Activated naive CD8-positive, alpha-beta T cell treated with anti-CD3 and anti-CD28 coated beads, Interleukin-2, amount 10 ng/mL, durations not matched to agents 7 days and 5 days (primary cell): ENCODE measurements at regions of chr2 and their contacts with region 1.

Region 1: GRCh38 chr2:9630749-9631483 is at the start of gene YWHAQ:
- DNase-seq: peak; percentile 99
- ATAC-seq: peak; percentile 88
- H3K4me3 Mint-ChIP-seq: peak within 1 kb of the TSS; percentile 96
- H3K27ac Mint-ChIP-seq: peak within 1 kb of the TSS; percentile 95
- H3K4me1 Mint-ChIP-seq: peaks cover 39% of the 10 kb centered on the region
- H3K27me3 Mint-ChIP-seq: peaks cover 20% of the 10 kb centered on the region
- total RNA-seq, gene YWHAQ: 191 to 216 TPM

Region 2: GRCh38 chr2:9423100-9423921 is 207.6 kb before region 1 on chr2 and contains the starts of genes CPSF3 and ITGB1BP1:
- POLR2A ChIA-PET with region 1: interaction called, 18 read pairs
- DNase-seq: peak; percentile 98
- ATAC-seq: peak; percentile 84
- H3K4me3 Mint-ChIP-seq: no peak within 1 kb of the TSS
- H3K27ac Mint-ChIP-seq: peak within 1 kb of the TSS; percentile 92
- H3K4me1 Mint-ChIP-seq: peaks cover 21% of the 10 kb centered on the region
- H3K27me3 Mint-ChIP-seq: no peaks in the 10 kb centered on the region
- total RNA-seq, gene CPSF3: 43.3 to 48.0 TPM
- total RNA-seq, gene ITGB1BP1: 104 to 122 TPM

Region 3: GRCh38 chr2:9508931-9509330 is 122.0 kb before region 1 on chr2:
- POLR2A ChIA-PET with region 1: no interaction called
- DNase-seq: no peak
- ATAC-seq: no peak
- H3K4me3 Mint-ChIP-seq: no peak overlapping the region
- H3K27ac Mint-ChIP-seq: no peak overlapping the region
- H3K4me1 Mint-ChIP-seq: no peaks in the 10 kb centered on the region
- H3K27me3 Mint-ChIP-seq: no peaks in the 10 kb centered on the region

Region 4: DNA sequence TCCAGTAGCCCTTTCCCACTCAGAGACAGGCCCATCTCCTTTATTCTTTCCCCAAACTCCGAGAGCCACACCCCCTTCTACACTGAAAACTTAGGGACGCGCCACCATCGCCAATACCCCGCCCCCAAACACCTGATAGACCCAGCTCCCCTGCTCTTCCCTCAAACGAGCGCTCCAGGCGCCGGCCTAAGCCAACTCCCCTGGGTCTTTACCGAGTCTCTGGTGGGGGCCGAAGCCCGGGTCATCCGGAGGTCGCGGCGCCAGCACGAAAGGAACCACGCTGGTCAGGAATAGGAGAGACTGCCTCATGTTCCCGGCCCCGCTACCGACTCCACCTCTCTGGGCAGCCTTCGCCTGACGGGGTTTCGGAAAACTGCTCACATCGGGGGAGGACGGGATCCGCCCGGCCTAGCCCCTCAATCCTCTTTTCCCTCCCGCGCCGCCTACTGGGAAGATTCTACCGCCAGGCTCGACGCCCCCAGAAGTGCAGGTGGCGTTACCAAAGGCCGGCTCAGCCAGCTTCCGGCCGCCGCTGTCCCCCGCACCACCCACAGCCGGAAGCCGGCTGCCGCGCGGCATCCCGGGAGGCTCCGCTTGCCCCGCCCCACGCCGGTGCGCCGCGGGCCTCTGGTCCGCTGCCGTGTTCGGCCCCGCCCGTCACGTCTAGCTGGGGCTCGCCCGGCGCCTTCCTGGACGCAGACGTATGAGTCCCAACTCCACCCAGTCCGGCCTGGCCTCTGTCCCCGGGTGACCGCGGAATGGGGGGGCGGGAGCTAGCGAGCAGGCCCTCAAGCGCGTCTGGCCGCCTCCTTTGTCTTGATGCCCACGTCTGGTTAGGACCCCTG is 75.4 kb before region 1 on chr2 and contains the start of gene ADAM17:
- POLR2A ChIA-PET with region 1: interaction called, 38 read pairs
- DNase-seq: peak; percentile 95
- ATAC-seq: peak; percentile 92
- H3K4me3 Mint-ChIP-seq: peak within 1 kb of the TSS; percentile 97
- H3K27ac Mint-ChIP-seq: peak within 1 kb of the TSS; percentile 94
- H3K4me1 Mint-ChIP-seq: peaks cover 41% of the 10 kb centered on the region
- H3K27me3 Mint-ChIP-seq: no peaks in the 10 kb centered on the region
- total RNA-seq, gene ADAM17: 24.7 to 25.3 TPM

Region 5: GRCh38 chr2:9618410-9618809 is 12.5 kb before region 1 on chr2:
- POLR2A ChIA-PET with region 1: interaction called, 20 read pairs
- DNase-seq: no peak
- ATAC-seq: peak; percentile 100
- H3K4me3 Mint-ChIP-seq: peak overlapping the region; percentile 76
- H3K27ac Mint-ChIP-seq: peak overlapping the region; percentile 81
- H3K4me1 Mint-ChIP-seq: peaks cover 63% of the 10 kb centered on the region
- H3K27me3 Mint-ChIP-seq: no peaks in the 10 kb centered on the region

Region 6: DNA sequence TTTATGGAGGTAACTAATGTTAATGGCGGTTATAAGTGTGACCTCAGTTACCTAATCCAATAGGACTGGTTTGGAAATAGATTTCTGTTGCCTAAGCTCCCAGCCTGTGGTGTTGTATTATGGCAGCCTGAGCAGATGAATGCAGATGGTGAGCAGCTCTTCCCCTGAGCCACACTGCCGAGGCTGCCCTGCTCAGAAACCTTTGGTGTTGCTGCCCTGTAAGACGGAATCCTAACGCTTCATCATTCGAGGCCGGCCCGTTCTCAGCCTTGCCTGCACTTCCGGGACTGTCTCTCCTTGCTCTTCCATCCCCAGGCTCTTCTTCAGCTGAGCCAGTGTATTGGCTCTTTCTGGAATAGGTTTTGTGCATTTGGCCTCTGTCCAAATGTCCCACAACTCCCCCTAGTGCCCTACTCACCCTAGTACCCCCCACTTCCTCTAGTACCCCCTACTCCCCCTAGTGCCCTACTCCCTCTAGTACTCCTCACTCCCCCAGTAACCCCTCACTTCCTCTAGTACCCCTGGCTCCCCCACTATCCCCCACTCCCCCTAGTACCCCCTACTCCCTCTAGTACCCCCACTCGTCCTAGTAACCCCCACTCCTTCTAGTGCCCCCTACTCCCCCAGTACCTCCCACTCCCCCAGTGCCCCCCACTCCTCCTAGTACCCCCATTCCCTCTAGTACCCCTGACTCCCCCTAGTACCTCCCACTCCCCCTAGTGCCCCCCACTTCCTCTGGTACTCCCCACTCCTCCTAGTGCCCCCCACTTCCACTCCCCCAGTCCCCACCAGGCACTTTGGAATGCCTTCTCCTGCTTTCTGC is 106.3 kb after region 1 on chr2:
- POLR2A ChIA-PET with region 1: interaction called, 13 read pairs
- DNase-seq: no peak
- ATAC-seq: no peak
- H3K4me3 Mint-ChIP-seq: no peak overlapping the region
- H3K27ac Mint-ChIP-seq: peak overlapping the region; percentile 67
- H3K4me1 Mint-ChIP-seq: peaks cover 28% of the 10 kb centered on the region
- H3K27me3 Mint-ChIP-seq: peaks cover 3% of the 10 kb centered on the region

Region 7: GRCh38 chr2:10196110-10196892 is 565.4 kb after region 1 on chr2:
- POLR2A ChIA-PET with region 1: no interaction called
- DNase-seq: no peak
- ATAC-seq: no peak
- H3K4me3 Mint-ChIP-seq: no peak overlapping the region
- H3K27ac Mint-ChIP-seq: no peak overlapping the region
- H3K4me1 Mint-ChIP-seq: no peaks in the 10 kb centered on the region
- H3K27me3 Mint-ChIP-seq: no peaks in the 10 kb centered on the region